ENCODE measurements at regions of chr22 and their contacts with region 1.

Region 1: DNA sequence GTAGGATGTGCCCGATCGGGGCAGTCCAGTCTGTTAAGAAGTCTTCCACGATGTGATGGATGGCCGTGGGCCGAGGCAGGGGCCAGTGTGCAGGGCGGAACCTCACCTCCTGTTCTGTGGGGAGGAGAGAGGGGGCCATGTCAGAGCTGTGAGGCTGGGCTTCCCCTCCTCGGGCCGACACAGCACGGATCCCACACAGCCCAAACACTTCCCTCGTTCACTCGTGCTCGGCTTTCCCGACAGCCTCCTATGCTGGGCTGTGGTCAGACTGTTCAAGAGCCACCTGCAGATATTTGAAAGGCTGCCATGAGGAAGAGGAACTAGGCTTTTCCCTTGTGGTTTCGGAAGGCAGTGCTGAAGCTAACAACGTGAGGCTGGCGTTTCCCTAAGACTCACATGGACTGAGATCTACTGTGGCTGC is 12.3 kb upstream of the TXN2 start:
- DNase-seq: peak; percentile 91 to 94 (median 94)
- H3K4me3 ChIP-seq: peak overlapping the region in 5 of 7 experiments; percentile 21 to 56 (median 44)
- H3K27ac ChIP-seq: no peak overlapping the region
- H3K4me1 ChIP-seq: peaks cover 4 to 30% (median 24%) of the 10 kb centered on the region in 4 experiments
- H3K27me3 ChIP-seq: no peaks in the 10 kb centered on the region

Region 2: GRCh38 chr22:36481393-36482168 is 12.1 kb before region 1 on chr22 and contains the start of gene TXN2:
- CTCF ChIA-PET with region 1: interaction called, 19 read pairs
- POLR2A ChIA-PET with region 1: interaction called, 3 read pairs
- DNase-seq: peak; percentile 96 to 99 (median 98)
- H3K4me3 ChIP-seq: peak within 1 kb of the TSS; percentile 74 to 99 (median 89)
- H3K27ac ChIP-seq: peak within 1 kb of the TSS; percentile 75 to 90
- H3K4me1 ChIP-seq: peaks cover 7 to 19% (median 16%) of the 10 kb centered on the region in 4 experiments
- H3K27me3 ChIP-seq: no peaks in the 10 kb centered on the region